PC-3 (cell line): ENCODE measurements at regions of chr1 and their contacts with region 1.

Region 1: DNA sequence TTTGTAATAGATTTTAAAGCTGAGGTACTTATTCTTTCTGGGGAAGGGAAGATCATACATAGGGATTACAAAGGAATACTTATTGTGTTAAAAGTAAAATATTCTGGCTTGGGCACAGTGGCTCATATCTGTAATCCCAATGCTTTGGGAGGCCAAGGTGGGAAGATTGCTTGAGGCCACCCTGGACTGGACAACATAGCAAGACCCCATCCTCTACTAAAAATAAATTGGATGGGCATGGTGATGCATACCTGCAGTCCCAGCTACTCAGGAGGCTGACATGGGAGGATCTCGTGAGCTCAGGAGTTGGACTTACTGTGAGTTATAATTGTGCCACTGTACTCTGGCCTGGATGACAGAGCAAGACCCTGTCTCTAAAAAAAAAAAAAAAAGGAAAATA is 27.6 kb downstream of the GABPB2 start:
- DNase-seq: no peak
- ATAC-seq: no peak
- H3K4me3 ChIP-seq: no peak overlapping the region
- H3K27ac ChIP-seq: no peak overlapping the region
- H3K4me1 ChIP-seq: peaks cover 3% of the 10 kb centered on the region; the same call in 1 of the 2 replicates
- H3K27me3 ChIP-seq: no peaks in the 10 kb centered on the region
- CTCF ChIP-seq: no peak

Region 2: GRCh38 chr1:151156515-151156819 is 58.3 kb after region 1 on chr1 and contains the start of gene TNFAIP8L2:
- CTCF ChIA-PET with region 1: interaction called, 28 read pairs
- POLR2A ChIA-PET with region 1: interaction called, 4 read pairs
- intact Hi-C with region 1: loop called (anchors 1 kb)
- DNase-seq: no peak
- ATAC-seq: peak; percentile 81
- H3K4me3 ChIP-seq: no peak within 1 kb of the TSS
- H3K27ac ChIP-seq: no peak within 1 kb of the TSS
- H3K4me1 ChIP-seq: no peaks in the 10 kb centered on the region
- H3K27me3 ChIP-seq: no peaks in the 10 kb centered on the region
- CTCF ChIP-seq: no peak
- total RNA-seq, gene TNFAIP8L2: not detected in 2 replicates

Region 3: DNA sequence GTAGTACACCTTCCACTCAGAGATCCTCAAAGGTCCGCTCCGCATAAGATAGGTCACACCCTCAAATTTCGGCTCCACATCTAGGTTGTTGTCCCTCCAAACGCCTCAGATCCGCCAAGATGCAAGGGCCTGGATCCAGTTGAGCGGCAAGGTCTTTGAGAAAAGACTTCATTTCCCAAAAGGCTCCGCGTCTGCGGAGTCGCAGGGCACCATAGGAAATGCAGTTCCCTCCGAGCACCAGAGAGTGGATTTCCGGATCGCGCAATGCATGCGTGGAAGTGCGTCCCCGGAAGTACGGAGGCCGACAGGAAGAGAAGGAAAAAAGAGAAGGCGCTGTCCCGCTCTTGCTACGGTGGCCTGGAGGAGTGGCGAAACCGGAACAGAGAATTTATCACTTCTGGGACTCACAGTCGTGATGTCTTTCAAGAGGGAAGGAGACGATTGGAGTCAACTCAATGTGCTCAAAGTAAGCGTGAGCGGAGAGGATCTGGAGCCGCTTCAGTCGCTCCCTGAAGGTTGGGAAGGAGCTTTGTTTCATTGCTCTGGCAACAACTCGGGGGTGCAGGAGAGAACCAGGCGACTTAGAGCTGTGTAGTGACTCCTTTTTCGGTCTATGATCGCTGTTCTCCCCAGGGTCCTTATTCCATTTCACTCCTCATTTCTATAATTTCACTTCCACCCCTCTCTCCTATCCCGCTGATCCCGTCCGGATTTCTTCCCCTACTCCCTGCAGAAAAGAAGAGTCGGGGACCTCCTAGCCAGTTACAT is 67.8 kb after region 1 on chr1 and contains the starts of genes LYSMD1 and SCNM1:
- CTCF ChIA-PET with region 1: interaction called, 12 read pairs
- POLR2A ChIA-PET with region 1: no interaction called
- intact Hi-C with region 1: no loop called
- DNase-seq: peak; percentile 100
- ATAC-seq: peak; percentile 93
- H3K4me3 ChIP-seq: peak within 1 kb of the TSS; percentile 85
- H3K27ac ChIP-seq: peak within 1 kb of the TSS; percentile 25
- H3K4me1 ChIP-seq: peaks cover 18% of the 10 kb centered on the region
- H3K27me3 ChIP-seq: no peaks in the 10 kb centered on the region
- CTCF ChIP-seq: no peak
- total RNA-seq, gene LYSMD1: 6.3 and 7.5 TPM in 2 replicates
- total RNA-seq, gene SCNM1: 80.3 and 82.4 TPM in 2 replicates

Region 4: GRCh38 chr1:151175910-151176309 is 77.8 kb after region 1 on chr1 and contains the start of gene TMOD4:
- CTCF ChIA-PET with region 1: interaction called, 10 read pairs
- POLR2A ChIA-PET with region 1: no interaction called
- intact Hi-C with region 1: no loop called
- DNase-seq: no peak
- ATAC-seq: peak; percentile 63
- H3K4me3 ChIP-seq: no peak within 1 kb of the TSS
- H3K27ac ChIP-seq: no peak within 1 kb of the TSS
- H3K4me1 ChIP-seq: no peaks in the 10 kb centered on the region
- H3K27me3 ChIP-seq: no peaks in the 10 kb centered on the region
- CTCF ChIP-seq: peak; percentile 70
- total RNA-seq, gene TMOD4: 1.8 and 2.7 TPM in 2 replicates

Region 5: GRCh38 chr1:151238467-151238739 is 140.3 kb after region 1 on chr1:
- CTCF ChIA-PET with region 1: no interaction called
- POLR2A ChIA-PET with region 1: interaction called, 35 read pairs
- intact Hi-C with region 1: no loop called
- DNase-seq: peak; percentile 38
- ATAC-seq: peak; percentile 78; the same call in 1 of the 2 replicates
- H3K4me3 ChIP-seq: no peak overlapping the region
- H3K27ac ChIP-seq: no peak overlapping the region
- H3K4me1 ChIP-seq: 0 out of 2 replicates have a peak, but pooled peaks cover 4% of the 10 kb centered on the region
- H3K27me3 ChIP-seq: no peaks in the 10 kb centered on the region
- CTCF ChIP-seq: no peak

Region 6: GRCh38 chr1:151251656-151252470 is 153.7 kb after region 1 on chr1:
- CTCF ChIA-PET with region 1: interaction called, 6 read pairs
- POLR2A ChIA-PET with region 1: no interaction called
- intact Hi-C with region 1: loop called (anchors 2 kb)
- DNase-seq: peak; percentile 86
- ATAC-seq: peak; percentile 62
- H3K4me3 ChIP-seq: no peak overlapping the region
- H3K27ac ChIP-seq: no peak overlapping the region
- H3K4me1 ChIP-seq: peaks cover 5% of the 10 kb centered on the region; the same call in 1 of the 2 replicates
- H3K27me3 ChIP-seq: no peaks in the 10 kb centered on the region
- CTCF ChIP-seq: peak; percentile 94